Naive thymus-derived CD4-positive, alpha-beta T cell (primary cell): ENCODE measurements at regions of chr11 and their contacts with region 1.

Region 1: GRCh38 chr11:43852057-43852636 is 28.5 kb upstream of the ALKBH3 start:
- DNase-seq: peak; percentile 7 to 57 (median 40)
- ATAC-seq: peak; percentile 84
- H3K4me3 ChIP-seq: no peak overlapping the region
- H3K4me3 Mint-ChIP-seq: no peak overlapping the region
- H3K27ac ChIP-seq: no peak overlapping the region
- H3K27ac Mint-ChIP-seq: no peak overlapping the region
- H3K4me1 ChIP-seq: no peaks in the 10 kb centered on the region
- H3K4me1 Mint-ChIP-seq: peaks cover 4 to 7% (median 6%) of the 10 kb centered on the region in 7 donors
- H3K27me3 ChIP-seq: no peaks in the 10 kb centered on the region
- H3K27me3 Mint-ChIP-seq: no peaks in the 10 kb centered on the region

Region 2: DNA sequence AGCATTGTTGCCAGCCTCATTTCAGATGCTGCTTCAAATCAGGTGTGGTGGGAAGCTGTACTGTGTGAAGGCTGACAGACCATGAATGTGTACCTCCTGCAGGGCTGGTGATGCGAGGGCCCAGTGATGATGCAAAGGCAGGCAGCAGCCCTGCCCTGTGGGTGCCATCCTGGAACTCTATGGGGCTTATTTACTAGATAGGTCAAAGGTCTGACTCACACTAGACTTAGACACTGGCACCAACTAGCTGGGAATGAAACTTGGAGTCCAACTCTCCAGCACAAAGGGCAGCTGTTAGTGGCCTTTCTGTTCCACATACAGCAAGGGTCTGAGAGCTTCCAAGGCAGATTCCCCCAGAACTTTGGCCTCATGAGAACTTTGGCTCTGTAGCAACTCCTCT is 355.0 kb before region 1 on chr11:
- CTCF ChIA-PET with region 1: no interaction called
- POLR2A ChIA-PET with region 1: no interaction called
- intact Hi-C with region 1: loop called in 1 of 2 experiments (anchors 10 kb)
- DNase-seq: no peak
- ATAC-seq: no peak
- H3K4me3 ChIP-seq: no peak overlapping the region
- H3K4me3 Mint-ChIP-seq: no peak overlapping the region
- H3K27ac ChIP-seq: no peak overlapping the region
- H3K27ac Mint-ChIP-seq: peak overlapping the region in 1 of 9 donors; percentile 56
- H3K4me1 ChIP-seq: no peaks in the 10 kb centered on the region
- H3K4me1 Mint-ChIP-seq: no peaks in the 10 kb centered on the region
- H3K27me3 ChIP-seq: no peaks in the 10 kb centered on the region
- H3K27me3 Mint-ChIP-seq: peaks cover 0 to 7% (median 4%) of the 10 kb centered on the region in 5 donors

Region 3: DNA sequence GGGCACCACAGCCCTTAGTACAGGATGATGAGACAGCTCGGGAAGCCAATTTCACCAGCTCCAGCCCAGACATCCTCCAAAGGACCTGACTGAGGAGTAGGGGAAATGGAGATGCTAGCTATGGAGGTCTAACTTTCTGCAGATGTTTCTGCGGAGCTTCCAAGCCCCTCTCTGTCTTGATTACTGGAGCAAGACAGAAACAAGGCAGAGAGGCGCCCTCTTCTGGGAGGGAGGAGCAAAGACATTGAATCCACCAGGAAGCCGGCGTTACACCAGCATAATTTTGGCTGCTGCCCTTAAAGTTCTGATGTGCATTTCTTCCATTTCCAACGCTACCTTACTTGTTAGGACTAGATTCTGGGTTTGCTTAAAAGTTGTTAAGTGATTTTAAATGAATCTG is 278.9 kb before region 1 on chr11:
- CTCF ChIA-PET with region 1: interaction called, 3 read pairs
- POLR2A ChIA-PET with region 1: no interaction called
- intact Hi-C with region 1: loop called in 1 of 2 experiments (anchors 5 kb)
- DNase-seq: no peak
- ATAC-seq: no peak
- H3K4me3 ChIP-seq: no peak overlapping the region
- H3K4me3 Mint-ChIP-seq: no peak overlapping the region
- H3K27ac ChIP-seq: no peak overlapping the region
- H3K27ac Mint-ChIP-seq: no peak overlapping the region
- H3K4me1 ChIP-seq: no peaks in the 10 kb centered on the region
- H3K4me1 Mint-ChIP-seq: peaks cover 12 to 25% (median 21%) of the 10 kb centered on the region in 7 donors
- H3K27me3 ChIP-seq: peaks cover 14 to 31% of the 10 kb centered on the region in 2 donors
- H3K27me3 Mint-ChIP-seq: peaks cover 80 to 94% (median 87%) of the 10 kb centered on the region in 5 donors

Region 4: GRCh38 chr11:43788421-43788820 is 63.7 kb before region 1 on chr11:
- CTCF ChIA-PET with region 1: no interaction called
- POLR2A ChIA-PET with region 1: no interaction called
- intact Hi-C with region 1: no loop called
- DNase-seq: peak in 1 of 9 donors; percentile 5
- ATAC-seq: peak; percentile 82
- H3K4me3 ChIP-seq: no peak overlapping the region
- H3K4me3 Mint-ChIP-seq: peak overlapping the region in 1 of 10 donors; percentile 21
- H3K27ac ChIP-seq: no peak overlapping the region
- H3K27ac Mint-ChIP-seq: peak overlapping the region in 1 of 9 donors; percentile 74
- H3K4me1 ChIP-seq: no peaks in the 10 kb centered on the region
- H3K4me1 Mint-ChIP-seq: peaks cover 0 to 10% (median 4%) of the 10 kb centered on the region in 7 donors
- H3K27me3 ChIP-seq: no peaks in the 10 kb centered on the region
- H3K27me3 Mint-ChIP-seq: no peaks in the 10 kb centered on the region

Region 5: GRCh38 chr11:43825217-43825816 is 26.8 kb before region 1 on chr11:
- CTCF ChIA-PET with region 1: interaction called, 4 read pairs
- POLR2A ChIA-PET with region 1: no interaction called
- intact Hi-C with region 1: loop called in 1 of 2 experiments (anchors 1 kb)
- DNase-seq: no peak
- ATAC-seq: no peak
- H3K4me3 ChIP-seq: no peak overlapping the region
- H3K4me3 Mint-ChIP-seq: no peak overlapping the region
- H3K27ac ChIP-seq: no peak overlapping the region
- H3K27ac Mint-ChIP-seq: no peak overlapping the region
- H3K4me1 ChIP-seq: no peaks in the 10 kb centered on the region
- H3K4me1 Mint-ChIP-seq: peaks cover 0 to 4% (median 0%) of the 10 kb centered on the region in 7 donors
- H3K27me3 ChIP-seq: no peaks in the 10 kb centered on the region
- H3K27me3 Mint-ChIP-seq: no peaks in the 10 kb centered on the region